Activated B cell treated with CpG ODN at 0.5 μM for 24 hours (primary cell): ENCODE measurements at regions of chr11 and their contacts with region 1.

Region 1: GRCh38 chr11:73141848-73142286 is 251 bp downstream of the FCHSD2 start:
- DNase-seq: no peak
- ATAC-seq: peak; percentile 22
- H3K4me3 Mint-ChIP-seq: peak overlapping the region; percentile 99
- H3K27ac Mint-ChIP-seq: peak overlapping the region; percentile 95
- H3K4me1 Mint-ChIP-seq: peaks cover 78% of the 10 kb centered on the region
- H3K27me3 Mint-ChIP-seq: no peaks in the 10 kb centered on the region
- CTCF ChIP-seq: no peak

Region 2: DNA sequence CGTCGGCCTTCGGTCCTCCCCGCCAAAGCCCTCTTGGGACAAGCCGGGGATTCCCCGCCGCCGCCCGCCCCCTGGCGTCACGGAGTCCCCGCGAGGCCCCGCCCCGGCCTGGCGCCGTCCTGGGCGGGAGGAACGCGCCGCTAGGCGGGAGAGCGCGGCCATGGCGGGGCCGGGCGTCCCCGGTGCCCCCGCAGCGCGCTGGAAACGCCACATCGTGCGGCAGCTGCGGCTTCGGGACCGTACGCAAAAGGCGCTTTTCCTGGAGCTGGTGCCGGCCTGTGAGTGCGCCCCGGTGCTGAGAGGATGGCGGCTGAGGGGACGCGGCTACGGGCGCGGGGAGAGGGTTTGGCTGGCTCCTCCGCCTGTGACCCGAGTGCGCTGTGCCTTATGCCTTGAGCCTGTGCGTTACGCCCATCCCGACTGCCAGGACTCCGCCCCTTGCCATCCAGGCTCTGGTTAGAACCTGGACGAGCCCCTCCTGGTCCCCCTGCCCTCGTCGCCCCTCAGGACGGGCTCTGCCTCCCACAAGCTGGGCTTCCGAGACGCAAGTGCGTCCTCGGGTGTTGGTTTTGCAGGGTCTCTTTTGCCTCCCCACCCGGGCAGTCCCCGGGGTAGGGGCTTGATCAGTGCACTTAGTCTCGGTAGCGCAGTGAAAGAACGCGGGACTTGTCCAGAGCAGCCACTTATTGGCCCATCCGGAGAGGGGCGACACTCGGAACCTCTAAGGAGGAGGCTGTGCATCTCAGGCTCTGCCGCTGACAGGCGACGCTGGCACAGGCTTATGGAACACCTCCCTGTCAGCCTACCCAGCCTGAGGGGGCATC is 327.4 kb before region 1 on chr11 and contains the start of gene ATG16L2:
- CTCF ChIA-PET with region 1: no interaction called
- POLR2A ChIA-PET with region 1: interaction called, 6 read pairs
- intact Hi-C with region 1: loop called (anchors 2 kb)
- DNase-seq: peak; percentile 97
- ATAC-seq: peak; percentile 75
- H3K4me3 Mint-ChIP-seq: peak within 1 kb of the TSS; percentile 98
- H3K27ac Mint-ChIP-seq: peak within 1 kb of the TSS; percentile 94
- H3K4me1 Mint-ChIP-seq: peaks cover 54% of the 10 kb centered on the region
- H3K27me3 Mint-ChIP-seq: no peaks in the 10 kb centered on the region
- CTCF ChIP-seq: no peak
- total RNA-seq, gene ATG16L2: 73.5 and 96.7 TPM in 2 replicates

Region 3: GRCh38 chr11:72924568-72925190 is 217.2 kb before region 1 on chr11:
- CTCF ChIA-PET with region 1: interaction called, 9 read pairs
- POLR2A ChIA-PET with region 1: interaction called, 18 read pairs
- intact Hi-C with region 1: loop called (anchors 1 kb)
- DNase-seq: no peak
- ATAC-seq: peak; percentile 54
- H3K4me3 Mint-ChIP-seq: no peak overlapping the region
- H3K27ac Mint-ChIP-seq: peak overlapping the region; percentile 71
- H3K4me1 Mint-ChIP-seq: peaks cover 32% of the 10 kb centered on the region
- H3K27me3 Mint-ChIP-seq: no peaks in the 10 kb centered on the region
- CTCF ChIP-seq: no peak

Region 4: GRCh38 chr11:73047773-73048371 is 94.0 kb before region 1 on chr11:
- CTCF ChIA-PET with region 1: interaction called, 4 read pairs
- POLR2A ChIA-PET with region 1: interaction called, 18 read pairs
- intact Hi-C with region 1: loop called (anchors 2 kb)
- DNase-seq: no peak
- ATAC-seq: peak; percentile 85
- H3K4me3 Mint-ChIP-seq: peak overlapping the region; percentile 64
- H3K27ac Mint-ChIP-seq: peak overlapping the region; percentile 93
- H3K4me1 Mint-ChIP-seq: peaks cover 74% of the 10 kb centered on the region
- H3K27me3 Mint-ChIP-seq: no peaks in the 10 kb centered on the region
- CTCF ChIP-seq: no peak

Region 5: GRCh38 chr11:73099512-73100266 is 42.2 kb before region 1 on chr11:
- CTCF ChIA-PET with region 1: no interaction called
- POLR2A ChIA-PET with region 1: no interaction called
- intact Hi-C with region 1: no loop called
- DNase-seq: no peak
- ATAC-seq: peak; percentile 18
- H3K4me3 Mint-ChIP-seq: no peak overlapping the region
- H3K27ac Mint-ChIP-seq: peak overlapping the region; percentile 32
- H3K4me1 Mint-ChIP-seq: peaks cover 79% of the 10 kb centered on the region
- H3K27me3 Mint-ChIP-seq: no peaks in the 10 kb centered on the region
- CTCF ChIP-seq: no peak

Region 6: GRCh38 chr11:73164803-73165540 is 23.1 kb after region 1 on chr11:
- CTCF ChIA-PET with region 1: interaction called, 28 read pairs
- POLR2A ChIA-PET with region 1: interaction called, 551 read pairs
- intact Hi-C with region 1: no loop called
- DNase-seq: no peak
- ATAC-seq: peak; percentile 57
- H3K4me3 Mint-ChIP-seq: peak overlapping the region; percentile 16
- H3K27ac Mint-ChIP-seq: peak overlapping the region; percentile 26
- H3K4me1 Mint-ChIP-seq: peaks cover 78% of the 10 kb centered on the region
- H3K27me3 Mint-ChIP-seq: no peaks in the 10 kb centered on the region
- CTCF ChIP-seq: no peak

Region 7: GRCh38 chr11:73288873-73289707 is 147.2 kb after region 1 on chr11:
- CTCF ChIA-PET with region 1: interaction called, 3 read pairs
- POLR2A ChIA-PET with region 1: interaction called, 3 read pairs
- intact Hi-C with region 1: loop called (anchors 1 kb)
- DNase-seq: peak; percentile 66
- ATAC-seq: peak; percentile 90
- H3K4me3 Mint-ChIP-seq: peak overlapping the region; percentile 68
- H3K27ac Mint-ChIP-seq: peak overlapping the region; percentile 88
- H3K4me1 Mint-ChIP-seq: peaks cover 33% of the 10 kb centered on the region
- H3K27me3 Mint-ChIP-seq: no peaks in the 10 kb centered on the region
- CTCF ChIP-seq: peak; percentile 59

Region 8: DNA sequence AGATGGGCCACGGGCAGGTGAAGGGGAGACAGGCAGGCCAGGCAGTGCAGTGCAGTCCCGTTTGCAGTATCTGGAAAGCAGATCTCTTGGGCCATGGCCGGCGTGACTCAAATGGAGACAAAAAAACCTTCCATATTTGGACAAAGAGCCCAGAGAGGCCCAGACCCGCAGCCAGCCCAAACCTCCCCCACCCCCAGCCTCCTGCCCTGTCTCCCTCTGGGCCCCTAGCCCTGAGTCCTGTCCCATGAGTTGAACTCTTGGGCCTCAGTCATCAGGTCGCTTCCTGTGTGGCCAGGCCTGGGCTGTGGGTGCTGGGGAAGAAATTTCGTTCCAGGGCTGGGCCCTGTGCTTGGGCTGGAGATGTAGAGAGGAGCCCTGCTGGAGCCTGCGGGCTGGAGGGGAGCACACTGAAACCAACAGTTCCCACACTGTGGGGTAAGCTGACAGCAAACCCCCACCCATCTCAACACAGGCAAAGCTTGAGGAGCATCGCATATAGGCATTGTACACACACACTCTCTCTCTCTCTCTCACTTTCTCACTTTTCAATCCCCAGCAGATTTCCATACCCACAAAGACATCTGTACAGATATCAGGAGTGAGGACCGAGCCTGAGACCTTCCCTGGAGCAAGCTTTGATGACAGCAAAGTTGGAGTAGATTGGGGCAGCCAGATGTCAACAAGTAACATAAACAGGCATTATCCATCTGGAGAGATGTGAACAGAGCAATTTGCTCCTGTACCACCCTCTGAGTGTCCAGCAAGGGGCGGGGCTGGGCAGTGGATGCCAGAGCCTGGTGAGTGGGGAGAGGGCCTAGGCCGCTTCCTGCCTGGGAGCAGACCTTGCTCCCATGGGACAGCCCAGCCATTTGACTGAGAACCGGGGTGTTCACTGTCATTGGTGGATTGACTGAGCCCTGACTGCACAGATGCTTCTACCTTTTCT is 183.4 kb after region 1 on chr11:
- CTCF ChIA-PET with region 1: no interaction called
- POLR2A ChIA-PET with region 1: no interaction called
- intact Hi-C with region 1: no loop called
- DNase-seq: no peak
- ATAC-seq: no peak
- H3K4me3 Mint-ChIP-seq: no peak overlapping the region
- H3K27ac Mint-ChIP-seq: no peak overlapping the region
- H3K4me1 Mint-ChIP-seq: peaks cover 35% of the 10 kb centered on the region
- H3K27me3 Mint-ChIP-seq: no peaks in the 10 kb centered on the region
- CTCF ChIP-seq: no peak